Activated T-helper 1 cell treated with anti-CD3 and anti-CD28 coated beads, Interleukin-12 subunit alpha, Interleukin-12 subunit beta, Interleukin-2, Interleukin-4 antibody, amounts not matched to agents 30 ng/mL and 10 ng/mL and 1 ng/mL, durations not matched to agents 14 hours and 24 hours and 36 hours (primary cell): ENCODE measurements at regions of chr1 and their contacts with region 1.

Region 1: GRCh38 chr1:30718636-30719405 is 4.6 kb downstream of the MATN1 start:
- DNase-seq: peak; percentile 95
- H3K4me3 Mint-ChIP-seq: peak overlapping the region; percentile 89
- H3K27ac Mint-ChIP-seq: peak overlapping the region; percentile 93
- H3K4me1 Mint-ChIP-seq: peaks cover 20% of the 10 kb centered on the region
- H3K27me3 Mint-ChIP-seq: peaks cover 3% of the 10 kb centered on the region

Region 2: DNA sequence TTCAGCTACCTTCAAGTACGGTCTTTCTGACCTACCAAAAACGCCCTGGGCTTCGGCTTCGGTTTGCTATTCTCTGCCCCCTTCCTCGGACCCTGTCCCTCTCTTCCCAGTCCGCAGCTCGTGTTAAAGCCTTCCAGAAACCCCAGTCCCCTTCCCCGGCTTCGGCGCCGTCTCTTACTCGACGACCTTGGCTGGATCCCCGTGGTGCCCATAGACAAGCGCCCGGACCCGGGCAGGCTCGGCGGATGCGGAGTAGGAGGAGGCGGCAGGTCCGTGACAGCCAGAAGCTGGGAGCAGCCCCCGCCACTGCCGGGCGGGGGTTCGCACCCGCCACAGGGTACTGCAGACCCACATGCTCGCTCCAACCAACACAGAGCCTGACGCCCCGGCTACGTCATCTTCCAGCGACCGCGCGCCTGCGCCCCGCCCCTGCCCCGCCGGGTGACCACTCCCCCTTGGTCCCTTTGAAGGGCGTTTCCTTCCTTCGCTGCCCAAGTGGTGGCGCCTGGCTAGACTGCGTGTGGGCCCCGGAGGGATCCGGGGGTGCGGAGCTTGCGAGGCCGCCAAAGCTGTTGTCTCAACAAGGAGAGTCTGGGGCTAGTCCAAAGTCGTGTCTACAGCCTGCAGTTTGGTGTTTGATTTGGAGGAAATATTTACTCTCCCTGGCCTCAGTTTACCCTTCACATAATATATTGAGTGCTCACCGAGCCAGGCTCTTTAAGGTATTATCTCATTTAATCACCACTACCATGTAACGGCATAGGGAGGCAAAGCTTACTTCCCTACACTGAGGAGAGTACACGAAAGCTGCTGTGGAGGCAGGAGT is 1488.1 kb before region 1 on chr1 and contains the start of gene MECR:
- intact Hi-C with region 1: loop called (anchors 2 kb)
- DNase-seq: peak; percentile 95
- H3K4me3 Mint-ChIP-seq: peak within 1 kb of the TSS; percentile 94
- H3K27ac Mint-ChIP-seq: peak within 1 kb of the TSS; percentile 84
- H3K4me1 Mint-ChIP-seq: peaks cover 23% of the 10 kb centered on the region
- H3K27me3 Mint-ChIP-seq: peaks cover 15% of the 10 kb centered on the region
- total RNA-seq, gene MECR: 34.5 and 36.4 TPM in 2 replicates

Region 3: GRCh38 chr1:30684881-30685795 is 33.7 kb before region 1 on chr1:
- intact Hi-C with region 1: no loop called
- DNase-seq: no peak
- H3K4me3 Mint-ChIP-seq: no peak overlapping the region
- H3K27ac Mint-ChIP-seq: no peak overlapping the region
- H3K4me1 Mint-ChIP-seq: no peaks in the 10 kb centered on the region
- H3K27me3 Mint-ChIP-seq: peaks cover 52% of the 10 kb centered on the region

Region 4: GRCh38 chr1:30743584-30744059 is 24.8 kb after region 1 on chr1:
- intact Hi-C with region 1: loop called (anchors 1 kb)
- DNase-seq: peak; percentile 68
- H3K4me3 Mint-ChIP-seq: peak overlapping the region; percentile 64
- H3K27ac Mint-ChIP-seq: peak overlapping the region; percentile 98
- H3K4me1 Mint-ChIP-seq: peaks cover 96% of the 10 kb centered on the region
- H3K27me3 Mint-ChIP-seq: no peaks in the 10 kb centered on the region

Region 5: GRCh38 chr1:30779294-30780071 is 60.7 kb after region 1 on chr1:
- intact Hi-C with region 1: loop called (anchors 1 kb)
- DNase-seq: peak; percentile 83
- H3K4me3 Mint-ChIP-seq: no peak overlapping the region
- H3K27ac Mint-ChIP-seq: no peak overlapping the region
- H3K4me1 Mint-ChIP-seq: peaks cover 20% of the 10 kb centered on the region
- H3K27me3 Mint-ChIP-seq: peaks cover 8% of the 10 kb centered on the region

Region 6: GRCh38 chr1:30929135-30929889 is 210.5 kb after region 1 on chr1:
- intact Hi-C with region 1: loop called (anchors 1 kb)
- DNase-seq: peak; percentile 30
- H3K4me3 Mint-ChIP-seq: no peak overlapping the region
- H3K27ac Mint-ChIP-seq: no peak overlapping the region
- H3K4me1 Mint-ChIP-seq: no peaks in the 10 kb centered on the region
- H3K27me3 Mint-ChIP-seq: peaks cover 3% of the 10 kb centered on the region

Region 7: DNA sequence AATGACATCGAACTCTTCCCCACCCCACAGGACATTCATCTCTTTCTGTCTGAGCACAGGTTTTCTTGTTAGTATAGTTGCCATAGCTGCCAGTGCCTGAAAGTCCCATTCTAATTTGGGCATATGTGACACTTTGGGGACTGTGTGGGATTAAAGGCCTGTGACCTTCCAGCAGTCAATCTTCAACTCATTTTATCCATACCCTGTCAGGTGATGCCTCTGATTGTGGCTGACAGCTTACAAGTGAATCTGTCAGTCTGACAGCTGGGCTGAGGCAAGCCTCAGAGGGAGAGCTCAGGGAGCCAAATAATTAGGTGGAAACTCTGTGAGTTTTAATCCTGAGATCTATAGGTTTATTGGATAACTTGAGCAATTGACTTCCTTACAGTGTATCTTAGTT is 607.6 kb after region 1 on chr1:
- intact Hi-C with region 1: no loop called
- DNase-seq: no peak
- H3K4me3 Mint-ChIP-seq: no peak overlapping the region
- H3K27ac Mint-ChIP-seq: no peak overlapping the region
- H3K4me1 Mint-ChIP-seq: no peaks in the 10 kb centered on the region
- H3K27me3 Mint-ChIP-seq: no peaks in the 10 kb centered on the region